HEK293 (cell line): ENCODE measurements at regions of chr17 and their contacts with region 1.

Region 1: GRCh38 chr17:9676742-9677387 is 31.5 kb downstream of the USP43 start:
- H3K4me3 ChIP-seq: no peak overlapping the region
- H3K27ac ChIP-seq: no peak overlapping the region
- H3K4me1 ChIP-seq: no peaks in the 10 kb centered on the region
- CTCF ChIP-seq: no peak

Region 2: DNA sequence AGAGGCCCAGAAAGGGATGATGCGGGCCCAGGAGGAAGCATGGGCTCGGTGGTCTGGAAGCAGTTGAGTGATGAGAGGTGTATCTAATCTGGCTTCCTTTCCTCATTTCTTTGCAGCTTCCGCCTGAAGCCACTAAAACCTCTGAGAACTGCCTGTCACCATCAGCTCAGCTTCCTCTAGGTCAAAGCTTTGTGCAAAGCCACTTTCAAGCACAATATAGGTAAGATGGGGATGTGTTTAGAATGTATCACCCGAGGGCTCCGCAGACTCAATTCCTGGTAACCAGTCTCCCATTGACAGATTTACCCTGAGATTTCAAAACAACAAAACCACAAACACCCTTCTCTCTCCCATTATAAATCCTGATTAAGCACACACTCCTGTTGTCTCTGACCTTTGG is 10.3 kb before region 1 on chr17:
- CTCF ChIA-PET with region 1: interaction called, 13 read pairs
- POLR2A ChIA-PET with region 1: no interaction called
- H3K4me3 ChIP-seq: no peak overlapping the region
- H3K27ac ChIP-seq: no peak overlapping the region
- H3K4me1 ChIP-seq: peaks cover 3% of the 10 kb centered on the region; the same call in 1 of the 2 replicates
- CTCF ChIP-seq: no peak

Region 3: GRCh38 chr17:9696266-9697027 is 19.6 kb after region 1 on chr17:
- CTCF ChIA-PET with region 1: no interaction called
- POLR2A ChIA-PET with region 1: no interaction called
- H3K4me3 ChIP-seq: no peak overlapping the region
- H3K27ac ChIP-seq: no peak overlapping the region
- H3K4me1 ChIP-seq: no peaks in the 10 kb centered on the region
- CTCF ChIP-seq: no peak